IMR-90 (cell line): ENCODE measurements at regions of chr11 and their contacts with region 1.

Region 1: DNA sequence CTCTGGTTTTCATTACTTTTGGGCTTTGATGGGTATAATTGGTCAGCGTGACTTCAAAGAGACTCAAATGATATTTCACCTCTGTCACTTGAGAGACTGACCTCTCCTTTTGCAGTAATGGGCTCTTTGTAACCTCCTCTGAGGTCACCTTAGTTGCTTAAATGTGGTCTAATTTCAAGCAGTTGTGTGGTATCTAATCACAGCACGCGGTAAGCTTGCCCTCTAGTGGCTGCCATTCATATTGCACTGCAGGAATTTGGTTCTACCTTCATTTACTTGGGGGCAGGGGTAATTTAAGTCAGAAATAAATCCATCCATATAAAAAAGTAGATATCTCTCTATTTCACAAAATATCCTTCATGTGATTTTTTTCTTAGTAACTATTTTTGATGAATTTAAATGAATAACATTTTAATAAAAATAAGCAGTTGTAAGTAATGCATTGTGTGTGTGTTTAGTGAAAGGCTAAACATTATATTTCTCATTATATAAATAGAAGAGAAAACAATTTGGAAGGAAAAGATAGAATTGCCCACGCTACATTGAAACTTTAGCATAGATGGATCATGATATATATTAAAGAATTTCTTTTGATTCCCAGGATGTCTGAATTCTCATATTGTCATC is 55.0 kb upstream of the ANO3 start:
- DNase-seq: peak; percentile 71
- ATAC-seq: peak; percentile 96
- H3K4me3 ChIP-seq: no peak overlapping the region
- H3K27ac ChIP-seq: no peak overlapping the region
- H3K4me1 ChIP-seq: no peaks in the 10 kb centered on the region
- H3K27me3 ChIP-seq: no peaks in the 10 kb centered on the region
- CTCF ChIP-seq: peak; percentile 98
- POLR2A ChIP-seq: peak; percentile 30; the same call in 1 of the 2 replicates
- RAD21 ChIP-seq: peak; percentile 97

Region 2: GRCh38 chr11:26134481-26135355 is 142.2 kb before region 1 on chr11:
- CTCF ChIA-PET with region 1: no interaction called
- POLR2A ChIA-PET with region 1: no interaction called
- dilution Hi-C with region 1: no loop called
- in situ Hi-C with region 1: no loop called
- intact Hi-C with region 1: loop called (anchors 1 kb)
- DNase-seq: peak; percentile 38
- ATAC-seq: peak; percentile 89
- H3K4me3 ChIP-seq: no peak overlapping the region
- H3K27ac ChIP-seq: no peak overlapping the region
- H3K4me1 ChIP-seq: no peaks in the 10 kb centered on the region
- H3K27me3 ChIP-seq: no peaks in the 10 kb centered on the region
- CTCF ChIP-seq: no peak; the same call in 1 of the 2 replicates
- POLR2A ChIP-seq: no peak
- RAD21 ChIP-seq: peak; percentile 38